ENCODE measurements at regions of chr18 and their contacts with region 1.

Region 1: GRCh38 chr18:79988451-79989194 is at the start of gene TXNL4A:
- DNase-seq: peak; percentile 84
- H3K4me3 Mint-ChIP-seq: peak within 1 kb of the TSS; percentile 85
- H3K27ac Mint-ChIP-seq: peak within 1 kb of the TSS; percentile 85
- H3K4me1 Mint-ChIP-seq: peaks cover 35% of the 10 kb centered on the region
- H3K27me3 Mint-ChIP-seq: no peaks in the 10 kb centered on the region
- total RNA-seq, gene TXNL4A: 185 to 186 TPM

Region 2: GRCh38 chr18:79393635-79394533 is 594.7 kb before region 1 on chr18:
- CTCF ChIA-PET with region 1: no interaction called
- intact Hi-C with region 1: loop called (anchors 2 kb)
- DNase-seq: peak; percentile 73
- H3K4me3 Mint-ChIP-seq: peak overlapping the region; percentile 74
- H3K27ac Mint-ChIP-seq: peak overlapping the region; percentile 71
- H3K4me1 Mint-ChIP-seq: peaks cover 34% of the 10 kb centered on the region
- H3K27me3 Mint-ChIP-seq: peaks cover 5% of the 10 kb centered on the region

Region 3: GRCh38 chr18:79951578-79952455 is 36.8 kb before region 1 on chr18 and contains the start of gene SLC66A2:
- CTCF ChIA-PET with region 1: interaction called, 3 read pairs
- intact Hi-C with region 1: loop called (anchors 1 kb)
- DNase-seq: peak; percentile 94
- H3K4me3 Mint-ChIP-seq: peak within 1 kb of the TSS; percentile 78
- H3K27ac Mint-ChIP-seq: peak within 1 kb of the TSS; percentile 55
- H3K4me1 Mint-ChIP-seq: peaks cover 31% of the 10 kb centered on the region
- H3K27me3 Mint-ChIP-seq: no peaks in the 10 kb centered on the region
- total RNA-seq, gene SLC66A2: 26.0 to 26.8 TPM

Region 4: DNA sequence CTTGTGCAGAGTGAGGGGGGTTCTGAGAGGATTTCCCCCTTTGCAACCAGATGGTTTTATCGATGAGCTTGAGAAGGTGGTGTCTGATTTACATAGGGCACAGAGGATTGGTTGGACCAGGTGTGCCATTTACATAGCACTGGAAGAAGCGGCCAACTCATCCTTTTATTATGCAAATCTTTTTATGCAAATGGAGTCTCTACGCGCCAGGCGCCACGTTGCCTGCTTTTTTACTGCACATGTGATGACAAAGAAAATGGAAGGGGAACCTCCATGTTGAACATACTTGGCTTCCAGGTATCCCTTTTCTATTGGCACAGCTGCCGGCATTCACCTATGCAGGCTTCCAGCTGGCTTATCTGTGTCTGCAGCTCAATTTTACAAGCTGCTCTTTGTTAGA is 18.1 kb after region 1 on chr18:
- CTCF ChIA-PET with region 1: no interaction called
- intact Hi-C with region 1: no loop called
- DNase-seq: no peak
- H3K4me3 Mint-ChIP-seq: no peak overlapping the region
- H3K27ac Mint-ChIP-seq: no peak overlapping the region
- H3K4me1 Mint-ChIP-seq: no peaks in the 10 kb centered on the region
- H3K27me3 Mint-ChIP-seq: no peaks in the 10 kb centered on the region

Region 5: DNA sequence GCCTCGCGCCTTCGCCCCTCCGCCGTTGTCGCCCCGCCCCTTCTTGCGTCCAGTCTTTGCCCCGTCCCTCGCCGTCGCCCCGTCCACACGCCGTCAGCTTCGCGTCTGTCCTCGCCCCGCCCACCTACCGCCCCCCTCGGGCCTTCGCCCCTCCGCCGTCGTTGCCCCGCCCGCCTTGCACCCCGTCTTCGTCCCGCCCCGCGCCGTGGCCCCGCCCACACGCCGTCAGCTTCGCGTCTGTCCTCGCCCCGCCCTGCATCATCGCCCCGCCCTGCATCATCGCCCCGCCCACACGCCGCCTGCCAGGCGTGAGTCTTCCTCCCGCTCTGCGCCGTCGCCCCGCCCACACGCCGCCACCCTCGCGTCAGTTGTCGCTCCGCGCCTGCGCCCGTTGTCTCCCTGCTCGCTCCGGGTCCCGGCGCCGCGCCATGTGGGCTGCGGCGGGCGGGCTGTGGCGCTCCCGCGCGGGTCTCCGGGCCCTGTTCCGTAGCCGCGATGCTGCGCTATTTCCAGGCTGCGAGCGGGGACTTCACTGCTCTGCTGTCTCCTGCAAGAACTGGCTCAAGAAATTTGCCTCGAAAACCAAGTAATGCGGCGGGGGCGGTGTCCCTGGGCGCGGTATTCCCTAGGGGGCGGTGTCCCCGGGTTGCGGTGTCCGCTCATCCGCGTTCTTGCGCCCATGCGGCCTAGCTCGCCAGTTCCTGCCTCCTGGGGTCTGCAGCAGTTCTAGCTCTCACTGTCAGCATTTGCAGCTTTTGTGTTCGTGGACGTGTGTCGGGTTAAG is 45.6 kb after region 1 on chr18 and contains the start of gene RBFA:
- CTCF ChIA-PET with region 1: interaction called, 3 read pairs
- intact Hi-C with region 1: loop called (anchors 1 kb)
- DNase-seq: peak; percentile 100
- H3K4me3 Mint-ChIP-seq: peak within 1 kb of the TSS; percentile 82
- H3K27ac Mint-ChIP-seq: peak within 1 kb of the TSS; percentile 73
- H3K4me1 Mint-ChIP-seq: peaks cover 26% of the 10 kb centered on the region
- H3K27me3 Mint-ChIP-seq: no peaks in the 10 kb centered on the region
- total RNA-seq, gene RBFA: 35.7 to 36.0 TPM

Region 6: GRCh38 chr18:80147418-80148325 is 159.0 kb after region 1 on chr18:
- CTCF ChIA-PET with region 1: no interaction called
- intact Hi-C with region 1: loop called (anchors 2 kb)
- DNase-seq: peak; percentile 90
- H3K4me3 Mint-ChIP-seq: peak overlapping the region; percentile 82
- H3K27ac Mint-ChIP-seq: no peak overlapping the region
- H3K4me1 Mint-ChIP-seq: peaks cover 10% of the 10 kb centered on the region
- H3K27me3 Mint-ChIP-seq: peaks cover 24% of the 10 kb centered on the region